ENCODE measurements at regions of chr15 and their contacts with region 1.

Region 1: DNA sequence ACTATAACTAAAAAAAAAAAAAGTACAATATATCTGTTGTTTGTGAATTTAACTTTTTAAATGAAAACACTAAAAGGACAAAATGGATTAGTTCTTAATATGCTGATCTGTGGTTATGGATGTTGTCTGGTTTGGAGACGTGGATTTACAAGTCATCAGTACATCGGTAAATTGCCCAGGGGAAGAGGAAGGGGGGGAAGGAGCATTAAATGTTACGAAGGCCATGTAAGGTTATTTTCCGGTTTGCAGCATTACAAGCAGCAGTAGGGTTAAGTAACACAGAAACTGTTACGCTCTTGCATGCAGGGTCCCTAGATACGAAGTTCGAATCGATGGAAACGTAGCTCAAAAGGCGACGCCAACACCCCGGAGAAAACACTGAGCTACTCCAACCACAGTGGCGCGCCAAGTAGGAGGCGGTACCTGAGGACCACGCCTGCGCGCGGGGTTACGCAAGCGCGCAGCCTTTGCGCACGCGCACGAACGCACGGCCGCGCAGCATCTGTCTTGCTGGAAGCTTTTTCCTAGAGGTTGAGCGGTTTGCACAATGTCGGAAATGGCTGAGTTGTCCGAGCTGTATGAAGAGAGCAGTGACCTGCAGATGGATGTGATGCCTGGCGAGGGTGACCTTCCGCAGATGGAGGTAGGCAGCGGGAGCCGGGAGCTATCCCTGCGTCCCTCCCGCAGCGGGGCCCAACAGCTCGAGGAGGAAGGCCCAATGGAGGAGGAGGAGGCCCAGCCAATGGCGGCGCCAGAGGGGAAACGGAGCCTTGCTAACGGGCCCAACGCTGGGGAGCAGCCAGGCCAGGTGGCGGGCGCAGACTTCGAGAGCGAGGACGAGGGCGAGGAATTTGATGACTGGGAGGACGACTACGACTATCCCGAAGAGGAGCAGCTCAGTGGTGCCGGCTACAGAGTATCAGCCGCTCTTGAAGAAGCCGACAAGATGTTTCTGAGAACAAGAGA is at the start of gene EID1:
- DNase-seq: peak; percentile 96
- ATAC-seq: peak; percentile 91
- H3K4me3 Mint-ChIP-seq: peak within 1 kb of the TSS; percentile 98
- H3K27ac Mint-ChIP-seq: peak within 1 kb of the TSS; percentile 99
- H3K4me1 Mint-ChIP-seq: peaks cover 45% of the 10 kb centered on the region
- H3K27me3 Mint-ChIP-seq: peaks cover 7% of the 10 kb centered on the region
- total RNA-seq, gene EID1: 73.6 to 82.5 TPM

Region 2: GRCh38 chr15:48330855-48331795 is 546.8 kb before region 1 on chr15 and contains the start of gene DUT:
- CTCF ChIA-PET with region 1: no interaction called
- POLR2A ChIA-PET with region 1: no interaction called
- intact Hi-C with region 1: loop called in 1 of 2 experiments (anchors 10 kb)
- DNase-seq: peak; percentile 89
- ATAC-seq: peak; percentile 84
- H3K4me3 Mint-ChIP-seq: peak within 1 kb of the TSS; percentile 82
- H3K27ac Mint-ChIP-seq: peak within 1 kb of the TSS; percentile 95
- H3K4me1 Mint-ChIP-seq: peaks cover 28% of the 10 kb centered on the region
- H3K27me3 Mint-ChIP-seq: no peaks in the 10 kb centered on the region
- total RNA-seq, gene DUT: 371 to 500 TPM

Region 3: GRCh38 chr15:48925714-48926223 is 47.9 kb after region 1 on chr15:
- CTCF ChIA-PET with region 1: no interaction called
- POLR2A ChIA-PET with region 1: no interaction called
- intact Hi-C with region 1: loop called (anchors 1 to 5 kb)
- DNase-seq: peak; percentile 30
- ATAC-seq: peak; percentile 50
- H3K4me3 Mint-ChIP-seq: peak overlapping the region; percentile 15
- H3K27ac Mint-ChIP-seq: peak overlapping the region; percentile 65
- H3K4me1 Mint-ChIP-seq: peaks cover 57% of the 10 kb centered on the region
- H3K27me3 Mint-ChIP-seq: peaks cover 20% of the 10 kb centered on the region

Region 4: DNA sequence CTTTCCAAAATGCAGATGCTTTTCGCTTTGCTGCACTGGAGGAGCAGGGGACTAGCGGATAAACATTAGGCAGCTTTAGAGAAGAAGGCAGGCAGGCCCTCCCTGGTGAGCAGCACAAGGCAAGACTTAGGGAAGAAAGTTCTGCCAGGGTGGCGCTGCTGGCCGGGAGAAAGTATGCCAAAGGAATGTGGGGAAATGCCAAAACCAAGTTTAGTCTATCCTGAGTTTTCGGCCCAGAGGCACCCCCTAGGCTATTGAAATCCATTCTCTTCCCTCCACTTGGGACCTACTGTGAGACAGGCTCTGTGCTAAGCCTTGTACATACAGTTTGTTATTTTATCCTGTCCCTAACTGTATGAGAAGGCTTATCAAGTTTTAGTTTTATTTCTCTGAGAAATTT is 76.6 kb after region 1 on chr15:
- CTCF ChIA-PET with region 1: no interaction called
- POLR2A ChIA-PET with region 1: no interaction called
- intact Hi-C with region 1: no loop called
- DNase-seq: no peak
- ATAC-seq: no peak
- H3K4me3 Mint-ChIP-seq: no peak overlapping the region
- H3K27ac Mint-ChIP-seq: no peak overlapping the region
- H3K4me1 Mint-ChIP-seq: no peaks in the 10 kb centered on the region
- H3K27me3 Mint-ChIP-seq: peaks cover 2% of the 10 kb centered on the region

Region 5: GRCh38 chr15:48975472-48976419 is 97.8 kb after region 1 on chr15:
- CTCF ChIA-PET with region 1: interaction called, 10 read pairs
- POLR2A ChIA-PET with region 1: no interaction called
- intact Hi-C with region 1: loop called in 1 of 2 experiments (anchors 1 kb)
- DNase-seq: peak; percentile 89
- ATAC-seq: peak; percentile 98
- H3K4me3 Mint-ChIP-seq: peak overlapping the region; percentile 46
- H3K27ac Mint-ChIP-seq: no peak overlapping the region
- H3K4me1 Mint-ChIP-seq: peaks cover 2% of the 10 kb centered on the region
- H3K27me3 Mint-ChIP-seq: peaks cover 13% of the 10 kb centered on the region

Region 6: DNA sequence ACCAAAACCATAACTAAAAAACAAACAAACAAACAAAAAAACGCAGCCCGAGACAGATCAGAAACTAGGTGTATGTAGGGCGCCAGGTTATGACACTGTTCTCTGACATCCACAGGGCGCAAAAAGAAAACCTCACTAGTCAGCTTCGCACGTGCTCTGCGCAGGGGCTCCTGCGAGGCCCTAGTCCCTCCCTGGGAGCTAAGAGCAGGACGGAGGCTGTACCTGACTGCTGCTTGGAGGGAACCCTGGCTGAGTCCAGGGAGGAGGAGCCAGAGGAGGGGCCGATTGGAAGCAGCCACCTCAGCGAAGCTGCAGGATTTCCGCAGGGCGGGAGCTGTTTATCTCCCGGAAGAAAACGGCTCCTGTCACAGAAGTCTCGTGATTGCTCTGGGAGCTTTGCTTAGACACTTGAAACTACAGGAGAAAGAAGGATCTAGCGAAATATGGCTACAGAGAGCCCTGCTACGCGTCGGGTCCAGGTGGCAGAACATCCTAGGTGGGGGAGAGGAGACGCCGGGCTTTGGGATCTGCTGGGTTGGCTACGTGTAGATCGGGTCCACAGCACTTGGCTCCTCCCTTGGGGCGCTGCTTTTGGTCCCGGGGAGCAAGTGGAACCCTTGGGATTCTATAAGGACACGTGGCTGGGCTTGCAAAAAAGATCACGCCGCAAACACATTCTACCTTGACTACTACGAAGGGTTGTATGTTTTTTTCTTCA is 292.1 kb after region 1 on chr15 and contains the start of gene GALK2:
- CTCF ChIA-PET with region 1: no interaction called
- POLR2A ChIA-PET with region 1: interaction called, 5 read pairs
- intact Hi-C with region 1: loop called in 1 of 2 experiments (anchors 5 kb)
- DNase-seq: peak; percentile 90
- ATAC-seq: peak; percentile 99
- H3K4me3 Mint-ChIP-seq: peak within 1 kb of the TSS; percentile 82
- H3K27ac Mint-ChIP-seq: peak within 1 kb of the TSS; percentile 90
- H3K4me1 Mint-ChIP-seq: peaks cover 29% of the 10 kb centered on the region
- H3K27me3 Mint-ChIP-seq: no peaks in the 10 kb centered on the region
- total RNA-seq, gene GALK2: 19.9 to 27.1 TPM